MCF 10A (cell line): ENCODE measurements at regions of chr1 and their contacts with region 1.

Region 1: DNA sequence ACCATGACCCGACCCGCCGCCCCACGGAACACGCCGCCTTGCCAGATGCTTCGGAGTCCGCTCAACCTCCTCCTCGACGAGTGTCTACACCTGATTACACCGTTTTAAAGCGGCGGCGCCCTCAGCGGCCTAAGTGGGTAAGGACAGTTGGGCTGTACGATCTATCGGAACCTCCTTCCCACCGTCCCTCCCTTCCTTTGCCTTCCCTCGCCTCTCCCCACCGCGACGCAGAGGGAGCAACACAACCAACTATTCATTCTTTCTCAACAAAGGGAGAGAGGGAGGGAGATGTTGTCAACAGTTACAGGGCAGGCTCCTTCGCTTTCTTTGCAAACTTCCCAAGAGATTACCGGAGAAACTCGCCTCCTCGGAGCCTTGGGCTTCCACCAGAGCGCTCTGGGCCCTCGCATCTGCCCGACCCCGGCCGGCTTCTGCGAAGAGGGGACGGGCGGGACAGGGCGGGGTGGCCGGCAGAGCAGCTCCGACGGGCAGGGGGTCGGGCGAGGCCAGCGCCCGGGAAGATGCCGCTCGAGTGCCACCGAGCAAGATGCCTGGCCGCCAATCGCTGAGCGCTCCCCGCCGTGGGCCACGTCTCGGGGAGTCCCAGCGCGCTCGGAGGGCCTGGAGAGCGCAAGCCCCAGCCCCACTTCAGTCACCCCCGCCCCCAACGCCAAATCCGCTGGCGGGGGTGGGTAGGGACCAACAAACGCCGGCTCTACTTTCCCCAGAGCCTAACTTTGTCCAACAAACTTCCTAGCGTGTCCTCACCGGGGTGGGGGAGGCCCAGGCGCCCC is 683 bp downstream of the BCAR3 start:
- DNase-seq: peak; percentile 91
- H3K4me3 Mint-ChIP-seq: peak overlapping the region; percentile 86
- H3K27ac Mint-ChIP-seq: peak overlapping the region; percentile 94
- H3K4me1 Mint-ChIP-seq: peaks cover 39% of the 10 kb centered on the region
- H3K27me3 Mint-ChIP-seq: no peaks in the 10 kb centered on the region
- CTCF ChIP-seq: peak; percentile 48

Region 2: GRCh38 chr1:93437976-93438605 is 242.9 kb before region 1 on chr1:
- CTCF ChIA-PET with region 1: interaction called, 3 read pairs
- POLR2A ChIA-PET with region 1: interaction called, 5 read pairs
- intact Hi-C with region 1: loop called (anchors 2 kb)
- DNase-seq: peak; percentile 55
- H3K4me3 Mint-ChIP-seq: no peak overlapping the region
- H3K27ac Mint-ChIP-seq: no peak overlapping the region
- H3K4me1 Mint-ChIP-seq: peaks cover 6% of the 10 kb centered on the region
- H3K27me3 Mint-ChIP-seq: no peaks in the 10 kb centered on the region
- CTCF ChIP-seq: peak; percentile 45

Region 3: DNA sequence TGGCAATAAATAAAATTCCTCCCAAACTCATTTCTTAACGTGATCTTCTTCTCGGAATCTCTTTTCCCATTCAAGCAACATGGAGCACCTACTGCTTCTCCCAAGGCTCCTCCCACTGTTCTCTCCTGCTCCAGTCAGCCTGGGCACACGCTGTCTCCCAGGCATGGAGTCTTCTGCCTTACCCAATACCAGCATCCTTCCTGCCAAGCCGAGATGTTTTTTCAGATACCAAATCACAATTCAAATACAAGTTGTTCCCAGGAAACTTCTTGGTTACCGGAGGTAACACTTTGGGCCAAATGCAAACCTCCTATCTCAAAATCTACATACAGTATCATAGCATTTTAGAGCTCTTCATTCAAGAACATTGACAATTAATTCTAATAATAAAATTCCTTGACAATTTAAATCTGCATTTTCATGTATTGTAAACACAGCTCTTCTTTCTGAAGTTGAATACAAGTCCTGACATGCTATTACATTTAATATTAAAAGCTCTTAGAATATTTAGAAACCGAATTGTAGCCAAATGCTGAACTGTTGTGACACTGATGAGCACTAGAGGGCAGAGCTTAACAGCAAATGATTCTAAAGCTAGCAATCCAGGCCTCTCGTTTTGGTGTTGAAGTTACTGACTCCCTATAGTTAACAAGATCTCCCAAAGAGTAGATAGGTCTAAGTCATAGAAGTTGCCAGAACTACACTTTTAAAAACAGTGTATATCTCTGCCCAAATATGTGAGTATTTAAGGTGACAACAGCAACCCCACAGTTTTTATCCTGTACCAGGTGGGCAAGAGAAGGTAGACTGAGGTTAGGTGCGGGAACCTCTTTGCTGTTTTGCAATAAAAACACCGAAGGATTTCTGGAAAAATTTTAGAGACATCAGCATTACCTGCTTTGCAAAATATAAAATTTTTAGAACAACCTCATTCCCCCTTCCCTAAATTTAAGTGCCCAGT is 51.6 kb before region 1 on chr1:
- CTCF ChIA-PET with region 1: interaction called, 17 read pairs
- POLR2A ChIA-PET with region 1: interaction called, 47 read pairs
- intact Hi-C with region 1: loop called (anchors 1 kb)
- DNase-seq: peak; percentile 76
- H3K4me3 Mint-ChIP-seq: peak overlapping the region; percentile 52
- H3K27ac Mint-ChIP-seq: peak overlapping the region; percentile 95
- H3K4me1 Mint-ChIP-seq: peaks cover 46% of the 10 kb centered on the region
- H3K27me3 Mint-ChIP-seq: no peaks in the 10 kb centered on the region
- CTCF ChIP-seq: peak; percentile 63

Region 4: GRCh38 chr1:93692983-93693591 is 12.1 kb after region 1 on chr1:
- CTCF ChIA-PET with region 1: interaction called, 7 read pairs
- POLR2A ChIA-PET with region 1: interaction called, 117 read pairs
- intact Hi-C with region 1: no loop called
- DNase-seq: peak; percentile 86
- H3K4me3 Mint-ChIP-seq: no peak overlapping the region
- H3K27ac Mint-ChIP-seq: no peak overlapping the region
- H3K4me1 Mint-ChIP-seq: no peaks in the 10 kb centered on the region
- H3K27me3 Mint-ChIP-seq: no peaks in the 10 kb centered on the region
- CTCF ChIP-seq: no peak

Region 5: DNA sequence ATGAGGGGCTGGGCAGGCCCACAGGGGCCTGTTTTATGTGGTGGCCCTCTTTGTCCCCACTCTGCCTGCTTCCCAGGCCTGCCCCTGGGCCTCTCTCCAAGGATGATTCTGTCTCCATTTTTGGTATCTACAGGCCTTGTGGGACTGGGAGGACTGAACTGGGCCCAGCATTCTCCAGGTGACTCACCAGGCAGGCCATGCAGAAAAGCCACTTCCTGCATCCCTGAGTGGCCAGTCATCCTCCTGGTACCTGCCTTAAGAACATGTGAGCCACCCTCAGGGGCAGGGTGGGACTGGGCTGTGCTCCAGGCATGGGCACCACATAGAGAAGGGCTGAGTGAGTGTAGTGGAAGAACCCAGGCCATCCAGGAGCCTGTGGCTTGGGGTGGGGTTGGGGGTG is 20.7 kb after region 1 on chr1:
- CTCF ChIA-PET with region 1: interaction called, 6 read pairs
- POLR2A ChIA-PET with region 1: interaction called, 44 read pairs
- intact Hi-C with region 1: no loop called
- DNase-seq: peak; percentile 99
- H3K4me3 Mint-ChIP-seq: peak overlapping the region; percentile 47
- H3K27ac Mint-ChIP-seq: peak overlapping the region; percentile 95
- H3K4me1 Mint-ChIP-seq: peaks cover 26% of the 10 kb centered on the region
- H3K27me3 Mint-ChIP-seq: no peaks in the 10 kb centered on the region
- CTCF ChIP-seq: no peak

Region 6: DNA sequence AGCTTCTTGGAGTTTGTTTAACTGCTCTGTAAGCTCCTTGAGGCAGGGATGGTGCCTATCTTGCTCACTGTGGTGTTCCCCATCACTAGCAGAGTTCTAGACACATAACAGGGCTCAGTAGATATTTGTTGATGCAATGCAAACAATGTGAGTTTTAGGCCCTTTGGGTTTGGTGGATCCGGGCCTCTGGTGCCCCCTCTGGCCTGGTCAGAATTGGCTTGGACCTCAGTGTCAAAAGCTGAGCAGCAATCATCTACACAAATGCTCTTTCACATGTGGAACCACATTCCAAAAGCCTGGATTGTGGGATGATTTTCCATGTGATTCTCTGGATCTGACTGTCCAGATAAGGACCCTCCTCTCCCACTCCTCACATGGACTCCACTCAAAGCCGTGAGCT is 54.0 kb after region 1 on chr1:
- CTCF ChIA-PET with region 1: interaction called, 3 read pairs
- POLR2A ChIA-PET with region 1: interaction called, 4 read pairs
- intact Hi-C with region 1: loop called (anchors 2 kb)
- DNase-seq: no peak
- H3K4me3 Mint-ChIP-seq: no peak overlapping the region
- H3K27ac Mint-ChIP-seq: no peak overlapping the region
- H3K4me1 Mint-ChIP-seq: peaks cover 62% of the 10 kb centered on the region
- H3K27me3 Mint-ChIP-seq: no peaks in the 10 kb centered on the region
- CTCF ChIP-seq: peak; percentile 7

Region 7: DNA sequence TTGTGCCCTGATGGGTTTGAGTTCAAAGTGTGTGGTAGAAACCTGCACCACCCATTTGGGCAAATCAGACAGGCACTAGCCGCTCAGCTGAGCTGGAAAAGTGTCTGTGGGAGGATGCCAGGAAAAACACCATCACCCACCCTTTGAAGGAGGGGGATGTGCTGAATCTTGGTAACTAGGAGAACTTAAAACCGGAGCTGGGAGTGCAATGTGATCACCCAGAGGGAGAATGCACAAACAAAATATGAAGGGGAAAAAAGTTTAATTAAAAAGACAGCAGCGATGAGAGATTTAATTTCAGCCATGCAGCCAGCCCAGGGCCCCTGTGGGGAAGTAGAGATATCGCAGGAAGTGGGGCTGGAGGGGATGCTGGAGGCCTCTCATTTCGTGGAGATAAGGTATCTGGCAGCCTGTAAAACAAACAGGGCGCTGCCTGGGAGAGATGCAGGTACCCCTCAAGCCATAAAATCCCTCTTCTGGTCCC is 87.5 kb after region 1 on chr1:
- CTCF ChIA-PET with region 1: interaction called, 5 read pairs
- POLR2A ChIA-PET with region 1: interaction called, 12 read pairs
- intact Hi-C with region 1: no loop called
- DNase-seq: no peak
- H3K4me3 Mint-ChIP-seq: peak overlapping the region; percentile 25
- H3K27ac Mint-ChIP-seq: peak overlapping the region; percentile 52
- H3K4me1 Mint-ChIP-seq: peaks cover 63% of the 10 kb centered on the region
- H3K27me3 Mint-ChIP-seq: no peaks in the 10 kb centered on the region
- CTCF ChIP-seq: no peak